Endothelial cell of umbilical vein (primary cell): ENCODE measurements at regions of chr18 and their contacts with region 1.

Region 1: DNA sequence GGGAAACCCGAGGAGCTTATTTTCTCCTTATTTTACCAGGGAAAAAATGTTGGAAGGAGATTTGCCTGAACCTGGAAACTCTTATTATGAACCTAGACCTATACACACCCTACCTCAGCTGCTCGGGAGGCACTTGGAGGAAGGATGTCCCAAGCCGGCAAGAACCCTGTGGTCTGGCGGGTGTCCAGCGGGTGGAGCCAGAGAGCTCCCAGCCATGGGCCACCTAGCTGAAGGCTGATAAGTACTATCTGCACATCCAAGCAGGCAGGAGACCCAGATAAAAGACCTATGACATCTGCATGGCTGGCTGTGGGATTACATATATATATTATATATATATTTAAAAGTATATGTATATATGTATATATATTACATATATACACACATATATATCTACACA is 1.1 kb upstream of the SLC14A1 start:
- DNase-seq: peak; percentile 83
- H3K4me3 ChIP-seq: no peak overlapping the region
- H3K27ac ChIP-seq: no peak overlapping the region
- H3K4me1 ChIP-seq: no peaks in the 10 kb centered on the region
- H3K27me3 ChIP-seq: peaks cover 26 to 41% of the 10 kb centered on the region in 2 experiments
- CTCF ChIP-seq: peak; percentile 76 to 93
- POLR2A ChIP-seq: no peak

Region 2: DNA sequence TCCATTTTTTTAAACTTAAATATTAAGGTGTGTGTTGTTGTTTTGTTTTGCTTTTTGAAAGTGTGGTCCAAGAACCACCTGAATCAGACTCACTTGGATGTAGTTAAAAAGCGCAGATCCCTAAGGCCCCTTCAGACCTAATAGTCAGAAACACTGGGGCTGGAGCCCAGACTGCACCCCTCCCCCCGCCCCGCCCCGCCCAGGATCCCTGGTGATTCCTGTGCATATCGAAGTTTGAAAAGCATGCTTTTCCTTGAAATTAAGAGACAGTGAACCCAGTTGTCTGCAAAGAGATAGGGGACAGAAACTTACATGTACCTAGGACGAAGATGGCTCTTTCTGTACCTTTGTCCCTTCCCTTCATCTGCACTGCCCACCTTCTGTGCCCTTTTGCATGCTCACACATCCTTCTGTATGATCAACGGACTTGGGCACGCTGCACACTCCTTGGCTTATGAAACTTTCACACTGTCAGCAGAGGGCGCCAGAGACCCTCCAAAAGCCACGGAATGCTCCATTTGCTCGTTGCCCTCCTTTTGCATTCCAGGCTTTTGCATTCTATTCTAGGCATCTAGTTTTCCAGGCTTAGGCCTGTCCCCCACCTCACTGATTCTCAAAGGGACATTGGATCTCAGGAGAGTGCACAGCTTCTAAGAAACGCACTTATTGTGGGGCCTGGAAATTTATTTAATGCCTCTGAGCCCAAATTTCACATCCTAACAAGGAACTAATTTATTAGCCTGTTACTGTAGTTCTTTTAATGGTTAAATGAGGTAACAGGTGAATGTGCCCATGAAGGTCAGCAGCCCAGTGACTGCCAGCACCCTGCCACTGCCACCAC is 31.7 kb before region 1 on chr18:
- CTCF ChIA-PET with region 1: interaction called, 6 read pairs
- POLR2A ChIA-PET with region 1: no interaction called
- dilution Hi-C with region 1: no loop called
- intact Hi-C with region 1: loop called (anchors 1 kb)
- DNase-seq: peak; percentile 71
- H3K4me3 ChIP-seq: no peak overlapping the region
- H3K27ac ChIP-seq: no peak overlapping the region
- H3K4me1 ChIP-seq: no peaks in the 10 kb centered on the region
- H3K27me3 ChIP-seq: peaks cover 4% of the 10 kb centered on the region in 2 experiments
- CTCF ChIP-seq: peak; percentile 71 to 85
- POLR2A ChIP-seq: no peak

Region 3: GRCh38 chr18:45745817-45746461 is 23.0 kb after region 1 on chr18:
- CTCF ChIA-PET with region 1: interaction called, 10 read pairs
- POLR2A ChIA-PET with region 1: no interaction called
- dilution Hi-C with region 1: no loop called
- intact Hi-C with region 1: no loop called
- DNase-seq: peak; percentile 60
- H3K4me3 ChIP-seq: no peak overlapping the region
- H3K27ac ChIP-seq: no peak overlapping the region
- H3K4me1 ChIP-seq: peaks cover 12% of the 10 kb centered on the region
- H3K27me3 ChIP-seq: peaks cover 5 to 7% of the 10 kb centered on the region in 2 experiments
- CTCF ChIP-seq: no peak
- POLR2A ChIP-seq: no peak

Region 4: DNA sequence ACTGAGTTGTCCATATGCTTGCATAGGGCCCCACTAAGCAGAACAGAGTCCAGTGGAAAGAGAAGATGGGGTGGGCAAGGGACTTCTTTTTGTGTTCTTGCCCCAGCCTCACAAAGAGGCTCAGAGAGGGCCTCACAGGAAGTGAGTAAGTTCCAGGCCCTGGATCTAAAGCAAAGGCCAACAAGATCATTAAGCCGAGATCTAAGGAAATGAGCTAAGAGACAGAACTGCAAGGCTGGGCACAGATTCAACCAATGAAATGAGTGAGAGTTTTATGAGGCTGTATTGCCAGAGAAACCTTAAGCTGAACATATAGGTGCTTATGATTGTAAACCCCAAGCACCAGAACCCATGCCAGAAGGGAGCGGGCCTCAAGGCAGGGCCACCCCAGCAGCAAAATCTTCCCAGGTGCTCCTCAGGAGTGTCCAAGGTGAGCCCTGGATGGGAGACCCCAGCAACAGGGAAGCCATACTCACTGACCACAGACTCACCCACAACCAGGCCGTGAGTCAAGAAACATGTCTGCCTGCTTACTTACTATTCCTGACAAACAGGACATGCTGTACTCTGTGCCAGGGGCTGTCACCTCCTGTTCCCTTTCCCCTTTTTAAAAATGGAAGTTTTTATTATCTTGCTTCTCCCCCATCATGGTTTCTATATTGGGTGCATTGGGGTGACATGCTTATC is 41.2 kb after region 1 on chr18:
- CTCF ChIA-PET with region 1: interaction called, 15 read pairs
- POLR2A ChIA-PET with region 1: no interaction called
- dilution Hi-C with region 1: no loop called
- intact Hi-C with region 1: no loop called
- DNase-seq: peak; percentile 80
- H3K4me3 ChIP-seq: no peak overlapping the region
- H3K27ac ChIP-seq: peak overlapping the region; percentile 80
- H3K4me1 ChIP-seq: peaks cover 27% of the 10 kb centered on the region
- H3K27me3 ChIP-seq: peaks cover 0 to 5% of the 10 kb centered on the region in 2 experiments
- CTCF ChIP-seq: no peak
- POLR2A ChIP-seq: peak; percentile 21

Region 5: GRCh38 chr18:45828917-45829811 is 106.3 kb after region 1 on chr18:
- CTCF ChIA-PET with region 1: interaction called, 307 read pairs
- POLR2A ChIA-PET with region 1: no interaction called
- dilution Hi-C with region 1: no loop called
- intact Hi-C with region 1: no loop called
- DNase-seq: no peak
- H3K4me3 ChIP-seq: no peak overlapping the region
- H3K27ac ChIP-seq: no peak overlapping the region
- H3K4me1 ChIP-seq: peaks cover 4% of the 10 kb centered on the region
- H3K27me3 ChIP-seq: peaks cover 3 to 5% of the 10 kb centered on the region in 2 experiments
- CTCF ChIP-seq: no peak
- POLR2A ChIP-seq: no peak

Region 6: GRCh38 chr18:45879681-45880655 is 157.1 kb after region 1 on chr18:
- CTCF ChIA-PET with region 1: interaction called, 167 read pairs
- POLR2A ChIA-PET with region 1: no interaction called
- dilution Hi-C with region 1: no loop called
- intact Hi-C with region 1: loop called (anchors 1 kb)
- DNase-seq: peak; percentile 75
- H3K4me3 ChIP-seq: no peak overlapping the region
- H3K27ac ChIP-seq: no peak overlapping the region
- H3K4me1 ChIP-seq: no peaks in the 10 kb centered on the region
- H3K27me3 ChIP-seq: no peaks in the 10 kb centered on the region
- CTCF ChIP-seq: peak; percentile 99 to 100
- POLR2A ChIP-seq: no peak